ENCODE measurements at regions of chr18 and their contacts with region 1.

Region 1: DNA sequence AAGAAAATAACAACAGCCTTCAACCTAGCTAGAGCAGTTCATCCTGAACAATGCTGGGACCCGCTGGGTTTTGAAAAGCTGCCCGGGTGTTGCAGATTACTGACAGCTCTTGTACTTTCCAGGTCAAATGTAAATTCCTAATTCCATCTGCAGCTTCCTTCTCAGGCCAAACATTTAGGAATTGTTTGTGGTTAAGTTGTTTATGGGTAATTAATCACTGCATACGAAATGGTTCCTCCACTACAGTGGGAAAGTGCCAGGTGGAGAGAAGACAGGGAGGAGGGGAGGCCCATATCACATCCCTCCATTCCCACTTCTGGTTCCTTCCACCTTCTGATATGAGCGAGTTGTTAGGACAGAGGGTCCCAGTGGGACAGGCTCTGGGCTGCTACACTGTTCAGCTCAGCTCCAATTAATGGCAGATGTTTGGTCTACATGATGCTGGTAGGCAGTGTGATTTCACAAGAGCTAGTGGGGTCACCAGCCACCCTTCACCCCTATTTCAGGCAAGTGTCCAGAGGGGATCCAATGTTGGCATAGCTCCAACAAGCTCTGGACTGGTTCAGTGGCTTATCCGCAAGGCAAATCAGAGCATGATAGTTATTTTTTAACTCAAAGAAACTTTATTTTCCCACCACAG is 112.9 kb upstream of the ACAA2 start:
- DNase-seq: no peak
- H3K4me3 ChIP-seq: no peak overlapping the region
- CTCF ChIP-seq: no peak
- POLR2A ChIP-seq: no peak

Region 2: GRCh38 chr18:49949951-49950395 is 23.7 kb after region 1 on chr18:
- intact Hi-C with region 1: loop called (anchors 1 kb)
- DNase-seq: peak in 1 of 2 donors; percentile 18
- H3K4me3 ChIP-seq: no peak overlapping the region
- CTCF ChIP-seq: no peak
- POLR2A ChIP-seq: no peak

Measured in lower leg skin (tissue), 4 donors.